ENCODE measurements at regions of chr2 and their contacts with region 1.

Region 1: GRCh38 chr2:43219383-43220228 is 6.8 kb downstream of the ZFP36L2 start:
- DNase-seq: peak; percentile 59 to 95 (median 82)
- ATAC-seq: peak; percentile 41
- H3K4me3 ChIP-seq: peak overlapping the region; percentile 89 to 94
- H3K4me3 Mint-ChIP-seq: peak overlapping the region; percentile 94
- H3K27ac ChIP-seq: peak overlapping the region; percentile 76 to 86
- H3K27ac Mint-ChIP-seq: peak overlapping the region; percentile 99
- H3K4me1 ChIP-seq: peaks cover 33% of the 10 kb centered on the region
- H3K4me1 Mint-ChIP-seq: peaks cover 49% of the 10 kb centered on the region
- H3K27me3 ChIP-seq: no peaks in the 10 kb centered on the region
- H3K27me3 Mint-ChIP-seq: no peaks in the 10 kb centered on the region
- CTCF ChIP-seq: no peak

Region 2: DNA sequence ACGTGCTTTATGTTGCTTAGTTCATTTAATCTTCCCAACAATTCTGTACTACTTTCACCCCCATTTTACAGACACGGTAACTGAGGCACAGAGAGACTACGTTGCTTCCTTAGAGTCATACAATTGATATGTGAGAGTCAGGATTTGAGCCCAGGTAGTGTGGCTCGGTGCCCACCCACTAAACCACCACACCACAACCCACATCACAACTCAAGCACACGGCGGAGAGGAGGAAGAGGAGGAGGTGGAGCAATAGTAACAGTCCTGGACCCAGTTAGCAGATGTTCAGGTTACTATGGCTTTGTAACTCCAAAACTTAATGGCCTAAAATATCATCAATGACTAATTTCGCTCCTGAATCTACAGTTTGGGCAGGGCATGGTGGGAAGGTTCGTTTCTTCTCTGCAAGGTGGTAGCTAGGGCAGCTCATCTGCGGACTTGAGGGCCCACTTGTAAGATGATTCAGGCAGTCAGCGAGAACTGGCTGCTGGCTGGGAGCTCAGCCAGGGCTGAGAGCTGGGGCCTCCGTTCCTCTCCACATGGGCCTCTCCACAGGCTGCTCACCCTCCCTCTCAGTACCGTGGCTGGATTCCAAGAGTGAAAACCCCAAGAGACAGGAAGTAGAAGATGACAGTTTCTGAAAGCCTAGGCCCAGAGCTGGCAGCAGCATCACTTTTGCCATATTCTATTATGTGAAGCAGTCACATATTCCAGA is 160.3 kb before region 1 on chr2:
- CTCF ChIA-PET with region 1: no interaction called
- POLR2A ChIA-PET with region 1: interaction called, 5 read pairs
- intact Hi-C with region 1: loop called in 1 of 2 experiments (anchors 2 kb)
- DNase-seq: peak; percentile 8 to 84 (median 51)
- ATAC-seq: peak; percentile 85
- H3K4me3 ChIP-seq: no peak overlapping the region
- H3K4me3 Mint-ChIP-seq: peak overlapping the region; percentile 46
- H3K27ac ChIP-seq: peak overlapping the region; percentile 36 to 46
- H3K27ac Mint-ChIP-seq: peak overlapping the region; percentile 87
- H3K4me1 ChIP-seq: peaks cover 27% of the 10 kb centered on the region
- H3K4me1 Mint-ChIP-seq: peaks cover 28% of the 10 kb centered on the region
- H3K27me3 ChIP-seq: no peaks in the 10 kb centered on the region
- H3K27me3 Mint-ChIP-seq: no peaks in the 10 kb centered on the region
- CTCF ChIP-seq: no peak

Region 3: GRCh38 chr2:43142921-43143438 is 76.6 kb before region 1 on chr2:
- CTCF ChIA-PET with region 1: interaction called, 83 read pairs
- POLR2A ChIA-PET with region 1: interaction called, 1,192 read pairs
- intact Hi-C with region 1: no loop called
- DNase-seq: peak in 7 of 9 experiments; percentile 24 to 74 (median 51)
- ATAC-seq: peak; percentile 41
- H3K4me3 ChIP-seq: peak overlapping the region; percentile 37 to 53
- H3K4me3 Mint-ChIP-seq: peak overlapping the region; percentile 66
- H3K27ac ChIP-seq: peak overlapping the region; percentile 40 to 49
- H3K27ac Mint-ChIP-seq: peak overlapping the region; percentile 92
- H3K4me1 ChIP-seq: peaks cover 76% of the 10 kb centered on the region
- H3K4me1 Mint-ChIP-seq: peaks cover 70% of the 10 kb centered on the region
- H3K27me3 ChIP-seq: no peaks in the 10 kb centered on the region
- H3K27me3 Mint-ChIP-seq: no peaks in the 10 kb centered on the region
- CTCF ChIP-seq: no peak

Region 4: GRCh38 chr2:43178602-43179542 is 40.7 kb before region 1 on chr2:
- CTCF ChIA-PET with region 1: interaction called, 537 read pairs
- POLR2A ChIA-PET with region 1: interaction called, 828 read pairs
- intact Hi-C with region 1: loop called (anchors 1 kb)
- DNase-seq: peak in 2 of 9 experiments; percentile 45 to 63
- ATAC-seq: no peak
- H3K4me3 ChIP-seq: no peak overlapping the region
- H3K4me3 Mint-ChIP-seq: peak overlapping the region; percentile 45
- H3K27ac ChIP-seq: peak overlapping the region in 1 of 2 experiments; percentile 17
- H3K27ac Mint-ChIP-seq: peak overlapping the region; percentile 90
- H3K4me1 ChIP-seq: peaks cover 57% of the 10 kb centered on the region
- H3K4me1 Mint-ChIP-seq: peaks cover 66% of the 10 kb centered on the region
- H3K27me3 ChIP-seq: no peaks in the 10 kb centered on the region
- H3K27me3 Mint-ChIP-seq: no peaks in the 10 kb centered on the region
- CTCF ChIP-seq: no peak

Region 5: GRCh38 chr2:43194121-43194869 is 25.3 kb before region 1 on chr2:
- CTCF ChIA-PET with region 1: interaction called, 14 read pairs
- POLR2A ChIA-PET with region 1: interaction called, 143 read pairs
- intact Hi-C with region 1: loop called (anchors 1 kb)
- DNase-seq: no peak
- ATAC-seq: peak; percentile 0
- H3K4me3 ChIP-seq: peak overlapping the region; percentile 40 to 52
- H3K4me3 Mint-ChIP-seq: peak overlapping the region; percentile 83
- H3K27ac ChIP-seq: peak overlapping the region; percentile 68 to 88
- H3K27ac Mint-ChIP-seq: peak overlapping the region; percentile 98
- H3K4me1 ChIP-seq: peaks cover 65% of the 10 kb centered on the region
- H3K4me1 Mint-ChIP-seq: peaks cover 61% of the 10 kb centered on the region
- H3K27me3 ChIP-seq: no peaks in the 10 kb centered on the region
- H3K27me3 Mint-ChIP-seq: no peaks in the 10 kb centered on the region
- CTCF ChIP-seq: no peak

Region 6: GRCh38 chr2:43201497-43201896 is 18.1 kb before region 1 on chr2:
- CTCF ChIA-PET with region 1: interaction called, 6 read pairs
- POLR2A ChIA-PET with region 1: interaction called, 143 read pairs
- intact Hi-C with region 1: loop called in 1 of 2 experiments (anchors 1 kb)
- DNase-seq: no peak
- ATAC-seq: no peak
- H3K4me3 ChIP-seq: no peak overlapping the region
- H3K4me3 Mint-ChIP-seq: no peak overlapping the region
- H3K27ac ChIP-seq: no peak overlapping the region
- H3K27ac Mint-ChIP-seq: no peak overlapping the region
- H3K4me1 ChIP-seq: peaks cover 39% of the 10 kb centered on the region
- H3K4me1 Mint-ChIP-seq: peaks cover 52% of the 10 kb centered on the region
- H3K27me3 ChIP-seq: no peaks in the 10 kb centered on the region
- H3K27me3 Mint-ChIP-seq: no peaks in the 10 kb centered on the region
- CTCF ChIP-seq: no peak

Region 7: GRCh38 chr2:43622931-43623451 is 403.4 kb after region 1 on chr2:
- CTCF ChIA-PET with region 1: no interaction called
- POLR2A ChIA-PET with region 1: no interaction called
- intact Hi-C with region 1: no loop called
- DNase-seq: no peak
- ATAC-seq: no peak
- H3K4me3 ChIP-seq: no peak overlapping the region
- H3K4me3 Mint-ChIP-seq: no peak overlapping the region
- H3K27ac ChIP-seq: no peak overlapping the region
- H3K27ac Mint-ChIP-seq: no peak overlapping the region
- H3K4me1 ChIP-seq: no peaks in the 10 kb centered on the region
- H3K4me1 Mint-ChIP-seq: no peaks in the 10 kb centered on the region
- H3K27me3 ChIP-seq: no peaks in the 10 kb centered on the region
- H3K27me3 Mint-ChIP-seq: peaks cover 27% of the 10 kb centered on the region
- CTCF ChIP-seq: no peak